Lower lobe of right lung (tissue), 2 donors: ENCODE measurements at regions of chr15 and their contacts with region 1.

Region 1: GRCh38 chr15:66851226-66852071 is 149.4 kb downstream of the SMAD6 start:
- DNase-seq: peak; percentile 92
- ATAC-seq: peak; percentile 93 to 95
- H3K4me3 ChIP-seq: peak overlapping the region; percentile 0
- H3K27ac ChIP-seq: no peak overlapping the region
- H3K4me1 ChIP-seq: peaks cover 17% of the 10 kb centered on the region
- H3K27me3 ChIP-seq: no peaks in the 10 kb centered on the region
- CTCF ChIP-seq: peak; percentile 98

Region 2: DNA sequence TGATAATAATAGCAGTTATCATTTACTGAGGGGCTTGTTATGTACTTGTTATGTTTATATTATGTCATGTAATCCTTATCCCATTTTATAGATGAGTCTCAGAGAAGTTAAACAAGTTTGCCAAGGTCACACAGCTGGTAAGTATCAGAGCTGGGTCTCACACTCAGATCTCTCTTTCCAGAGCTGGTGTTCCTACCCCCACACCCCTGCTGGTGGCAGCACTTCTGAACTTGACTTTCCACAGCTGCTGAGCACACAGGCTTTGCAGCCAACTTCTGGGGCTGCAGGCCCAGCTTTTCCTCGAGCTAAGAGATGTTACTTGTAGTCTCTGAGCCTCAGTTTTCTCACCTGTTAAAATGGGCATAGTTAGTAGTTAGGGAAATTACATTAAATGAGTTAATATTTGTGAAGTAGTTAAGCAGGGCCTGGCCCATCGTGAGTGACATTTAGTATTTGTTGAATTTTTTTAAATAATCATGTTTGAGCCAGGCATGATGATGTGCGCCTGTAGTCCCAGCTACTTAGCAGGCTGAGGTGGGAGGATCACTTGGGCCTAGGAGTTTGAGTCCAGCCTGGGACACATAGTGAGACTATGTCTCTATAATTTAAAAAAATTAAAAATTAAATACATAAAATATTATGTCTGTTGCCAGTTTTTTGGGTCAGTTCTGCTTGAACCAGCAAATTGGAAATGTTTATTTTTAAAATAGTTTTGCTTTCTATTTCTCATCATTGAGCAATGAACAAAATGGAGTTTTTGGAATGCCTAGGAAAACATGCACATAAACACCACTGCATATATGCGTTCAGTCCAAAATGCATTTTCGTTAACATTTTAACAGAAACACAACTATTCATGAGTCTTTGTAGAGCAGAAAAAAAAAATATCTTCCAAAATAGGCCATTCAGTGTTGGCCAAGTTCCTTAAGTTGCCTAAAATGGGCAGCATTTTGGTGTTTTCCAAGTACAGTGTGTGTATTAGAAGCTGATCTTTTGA is 62.1 kb before region 1 on chr15:
- intact Hi-C with region 1: loop called (anchors 10 kb)
- DNase-seq: no peak
- ATAC-seq: peak; percentile 70 to 80
- H3K4me3 ChIP-seq: no peak overlapping the region
- H3K27ac ChIP-seq: no peak overlapping the region
- H3K4me1 ChIP-seq: peaks cover 5% of the 10 kb centered on the region
- H3K27me3 ChIP-seq: no peaks in the 10 kb centered on the region
- CTCF ChIP-seq: peak; percentile 55